Caco-2 (cell line): ENCODE measurements at regions of chr5 and their contacts with region 1.

Region 1: GRCh38 chr5:38871790-38872551 is 26.2 kb downstream of the OSMR start:
- DNase-seq: peak in 1 of 2 experiments; percentile 27
- H3K4me3 ChIP-seq: no peak overlapping the region
- H3K4me3 Mint-ChIP-seq: no peak overlapping the region
- H3K27ac Mint-ChIP-seq: peak overlapping the region; percentile 52
- H3K4me1 ChIP-seq: peaks cover 21% of the 10 kb centered on the region
- H3K4me1 Mint-ChIP-seq: peaks cover 13% of the 10 kb centered on the region
- H3K27me3 ChIP-seq: no peaks in the 10 kb centered on the region
- H3K27me3 Mint-ChIP-seq: no peaks in the 10 kb centered on the region
- CTCF ChIP-seq: no peak

Region 2: DNA sequence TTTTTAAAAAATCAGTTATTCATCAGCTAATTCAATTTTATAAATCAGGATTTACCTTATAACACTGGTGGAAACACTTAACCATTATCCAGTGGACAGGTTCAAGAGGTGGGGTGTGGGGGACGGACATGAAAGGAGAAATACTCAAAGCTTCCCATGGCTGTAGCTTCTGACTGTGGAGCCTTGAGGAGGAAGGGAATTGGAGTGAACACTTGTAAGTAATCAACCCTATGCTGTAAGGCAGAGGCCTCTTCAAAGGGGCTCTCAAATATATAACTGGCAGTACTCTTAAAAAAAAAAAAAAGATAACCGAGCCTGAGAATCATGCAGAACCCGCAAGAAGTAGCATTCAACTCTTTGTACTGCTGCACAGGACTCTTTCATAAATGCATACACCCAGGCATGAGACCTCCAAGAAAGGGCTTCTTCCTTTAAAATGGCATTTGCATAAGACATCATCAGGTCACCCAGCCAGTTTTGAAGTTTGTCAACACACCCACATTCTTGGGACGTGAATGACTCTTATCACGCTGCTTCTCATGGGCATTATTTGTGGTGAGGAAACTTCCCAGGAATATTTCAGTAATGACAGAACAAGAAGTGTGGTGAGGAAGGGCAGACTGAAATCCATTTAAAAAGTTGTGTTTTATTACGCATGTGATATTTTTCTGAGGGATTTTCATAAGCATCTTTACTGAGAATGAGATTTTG is 18.1 kb before region 1 on chr5:
- CTCF ChIA-PET with region 1: no interaction called
- POLR2A ChIA-PET with region 1: no interaction called
- intact Hi-C with region 1: loop called (anchors 1 kb)
- DNase-seq: peak; percentile 54 to 59
- H3K4me3 ChIP-seq: no peak overlapping the region
- H3K4me3 Mint-ChIP-seq: no peak overlapping the region
- H3K27ac Mint-ChIP-seq: peak overlapping the region; percentile 37
- H3K4me1 ChIP-seq: peaks cover 6% of the 10 kb centered on the region; the same call in 1 of the 2 replicates
- H3K4me1 Mint-ChIP-seq: peaks cover 23% of the 10 kb centered on the region
- H3K27me3 ChIP-seq: no peaks in the 10 kb centered on the region
- H3K27me3 Mint-ChIP-seq: no peaks in the 10 kb centered on the region
- CTCF ChIP-seq: no peak